ENCODE measurements at regions of chr3 and their contacts with region 1.

Region 1: DNA sequence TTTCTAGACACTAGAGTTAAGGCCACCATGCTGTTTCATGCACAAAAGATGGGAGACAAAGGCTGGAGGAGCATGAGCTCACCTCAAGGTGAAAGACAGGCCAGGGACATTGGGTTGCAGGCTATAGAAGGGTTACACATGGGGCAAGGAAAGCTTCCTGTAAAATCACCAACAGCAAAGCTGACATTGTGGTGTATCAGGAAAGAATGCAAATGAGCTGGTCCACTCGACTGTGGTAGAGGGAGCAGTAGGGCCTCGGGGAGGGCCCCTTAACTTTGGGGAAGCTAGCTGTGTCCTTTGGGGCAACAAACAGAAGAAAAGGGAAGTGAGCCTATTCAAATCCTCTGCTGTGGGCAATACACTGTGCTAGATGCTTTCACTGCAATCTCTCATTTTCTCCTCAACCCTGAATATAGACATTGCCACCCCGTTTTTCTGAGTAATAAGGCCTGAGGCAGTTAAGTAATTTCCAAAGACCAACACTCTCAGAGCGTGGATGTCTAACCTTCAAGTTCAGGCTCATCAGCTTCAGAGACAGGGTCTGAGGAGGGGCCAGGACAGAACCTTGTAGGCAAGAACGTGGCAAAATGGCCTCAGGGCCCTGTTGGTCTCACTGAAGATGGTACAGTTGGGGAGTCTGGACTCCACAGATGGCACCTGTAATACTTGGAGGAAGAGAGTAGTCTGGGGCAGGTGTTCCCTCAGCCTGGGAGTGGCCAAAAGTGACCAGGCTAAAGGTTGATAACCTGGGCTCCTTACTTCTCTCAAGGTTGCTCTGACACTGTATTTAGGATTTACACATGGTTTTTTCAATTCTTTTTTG is 24.1 kb downstream of the CX3CR1 start:
- DNase-seq: peak; percentile 85 to 94 (median 89)
- H3K4me3 ChIP-seq: peak overlapping the region in 1 of 3 experiments; percentile 52
- H3K4me3 Mint-ChIP-seq: peak overlapping the region in 1 of 2 donors; percentile 52
- H3K27ac ChIP-seq: peak overlapping the region; percentile 92 to 93
- H3K27ac Mint-ChIP-seq: peak overlapping the region; percentile 93 to 98 (median 94)
- H3K4me1 ChIP-seq: peaks cover 94 to 97% of the 10 kb centered on the region in 2 donors
- H3K4me1 Mint-ChIP-seq: peaks cover 92% of the 10 kb centered on the region
- H3K27me3 ChIP-seq: no peaks in the 10 kb centered on the region
- H3K27me3 Mint-ChIP-seq: peaks cover 0 to 6% (median 0%) of the 10 kb centered on the region in 3 donors
- CTCF ChIP-seq: no peak

Region 2: GRCh38 chr3:37765591-37766488 is 1489.9 kb before region 1 on chr3:
- intact Hi-C with region 1: no loop called
- DNase-seq: no peak
- H3K4me3 ChIP-seq: no peak overlapping the region
- H3K4me3 Mint-ChIP-seq: no peak overlapping the region
- H3K27ac ChIP-seq: no peak overlapping the region
- H3K27ac Mint-ChIP-seq: peak overlapping the region in 1 of 7 donors; percentile 69
- H3K4me1 ChIP-seq: peaks cover 0 to 10% of the 10 kb centered on the region in 2 donors
- H3K4me1 Mint-ChIP-seq: peaks cover 8% of the 10 kb centered on the region
- H3K27me3 ChIP-seq: no peaks in the 10 kb centered on the region
- H3K27me3 Mint-ChIP-seq: peaks cover 2 to 3% (median 3%) of the 10 kb centered on the region in 3 donors
- CTCF ChIP-seq: no peak

Region 3: GRCh38 chr3:39202094-39202493 is 53.6 kb before region 1 on chr3:
- intact Hi-C with region 1: no loop called
- DNase-seq: no peak
- H3K4me3 ChIP-seq: no peak overlapping the region
- H3K4me3 Mint-ChIP-seq: no peak overlapping the region
- H3K27ac ChIP-seq: no peak overlapping the region
- H3K27ac Mint-ChIP-seq: no peak overlapping the region
- H3K4me1 ChIP-seq: no peaks in the 10 kb centered on the region
- H3K4me1 Mint-ChIP-seq: peaks cover 2% of the 10 kb centered on the region
- H3K27me3 ChIP-seq: no peaks in the 10 kb centered on the region
- H3K27me3 Mint-ChIP-seq: peaks cover 5 to 16% (median 5%) of the 10 kb centered on the region in 3 donors
- CTCF ChIP-seq: no peak

Region 4: DNA sequence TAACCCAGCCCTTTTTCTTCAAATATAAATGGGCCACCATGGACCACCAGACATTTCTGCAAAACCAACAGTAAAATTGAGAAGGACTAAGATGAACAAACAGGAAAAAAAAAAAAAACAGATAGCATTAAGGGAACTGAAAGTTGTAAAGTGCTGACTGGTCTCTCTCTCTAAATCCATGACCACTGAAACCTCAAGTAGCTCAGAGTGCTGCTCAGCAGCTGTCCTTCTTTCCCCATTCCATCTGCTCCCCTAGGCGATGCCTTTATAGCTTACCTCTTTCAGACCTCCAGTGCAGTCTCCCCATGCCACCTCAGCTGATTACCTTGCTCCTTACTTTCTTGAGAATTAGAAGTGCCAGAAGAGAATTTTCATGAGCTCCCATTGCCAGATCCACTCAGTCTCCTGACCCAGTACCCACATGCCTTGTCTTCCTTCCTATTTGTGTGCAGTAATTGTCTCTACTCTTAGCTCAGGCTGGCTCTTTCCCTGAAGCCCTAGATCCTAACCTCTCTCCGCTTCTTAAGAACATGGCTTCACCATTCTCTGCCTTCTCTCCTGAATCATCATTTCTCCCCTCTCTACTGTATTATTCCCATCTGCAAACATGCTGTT is 39.4 kb before region 1 on chr3:
- intact Hi-C with region 1: loop called in 1 of 2 experiments (anchors 2 kb)
- DNase-seq: peak; percentile 66 to 86 (median 79)
- H3K4me3 ChIP-seq: peak overlapping the region in 1 of 3 experiments; percentile 45
- H3K4me3 Mint-ChIP-seq: peak overlapping the region; percentile 40 to 82
- H3K27ac ChIP-seq: peak overlapping the region; percentile 81 to 82
- H3K27ac Mint-ChIP-seq: peak overlapping the region; percentile 85 to 96 (median 93)
- H3K4me1 ChIP-seq: peaks cover 73 to 91% of the 10 kb centered on the region in 2 donors
- H3K4me1 Mint-ChIP-seq: peaks cover 78% of the 10 kb centered on the region
- H3K27me3 ChIP-seq: no peaks in the 10 kb centered on the region
- H3K27me3 Mint-ChIP-seq: peaks cover 0 to 6% (median 0%) of the 10 kb centered on the region in 3 donors
- CTCF ChIP-seq: no peak

Region 5: GRCh38 chr3:39288300-39288808 is 32.6 kb after region 1 on chr3:
- intact Hi-C with region 1: no loop called
- DNase-seq: peak; percentile 69 to 80 (median 76)
- H3K4me3 ChIP-seq: no peak overlapping the region
- H3K4me3 Mint-ChIP-seq: no peak overlapping the region
- H3K27ac ChIP-seq: no peak overlapping the region
- H3K27ac Mint-ChIP-seq: peak overlapping the region in 3 of 7 donors; percentile 26 to 80 (median 38)
- H3K4me1 ChIP-seq: peaks cover 21 to 23% of the 10 kb centered on the region in 2 donors
- H3K4me1 Mint-ChIP-seq: peaks cover 28% of the 10 kb centered on the region
- H3K27me3 ChIP-seq: no peaks in the 10 kb centered on the region
- H3K27me3 Mint-ChIP-seq: peaks cover 0 to 1% (median 1%) of the 10 kb centered on the region in 3 donors
- CTCF ChIP-seq: peak; percentile 94